K562 (cell line): ENCODE measurements at regions of chr3 and their contacts with region 1.

Region 1: GRCh38 chr3:84209474-84209873 is 749.3 kb upstream of the CADM2 start:
- DNase-seq: no peak
- ATAC-seq: no peak
- H3K4me3 ChIP-seq: no peak overlapping the region
- H3K27ac ChIP-seq: no peak overlapping the region
- H3K4me1 ChIP-seq: no peaks in the 10 kb centered on the region
- H3K27me3 ChIP-seq: no peaks in the 10 kb centered on the region
- CTCF ChIP-seq: no peak
- EP300 ChIP-seq: no peak
- POLR2A ChIP-seq: no peak
- RAD21 ChIP-seq: no peak

Region 2: GRCh38 chr3:84275532-84275931 is 66.1 kb after region 1 on chr3:
- CTCF ChIA-PET with region 1: no interaction called
- POLR2A ChIA-PET with region 1: no interaction called
- in situ Hi-C with region 1: no loop called
- intact Hi-C with region 1: no loop called
- DNase-seq: no peak
- ATAC-seq: no peak
- H3K4me3 ChIP-seq: no peak overlapping the region
- H3K27ac ChIP-seq: no peak overlapping the region
- H3K4me1 ChIP-seq: no peaks in the 10 kb centered on the region
- H3K27me3 ChIP-seq: no peaks in the 10 kb centered on the region
- CTCF ChIP-seq: no peak
- EP300 ChIP-seq: no peak
- POLR2A ChIP-seq: no peak
- RAD21 ChIP-seq: no peak

Region 3: GRCh38 chr3:84621823-84622222 is 412.3 kb after region 1 on chr3:
- CTCF ChIA-PET with region 1: no interaction called
- POLR2A ChIA-PET with region 1: no interaction called
- in situ Hi-C with region 1: no loop called
- intact Hi-C with region 1: loop called (anchors 10 kb)
- DNase-seq: no peak
- ATAC-seq: no peak
- H3K4me3 ChIP-seq: no peak overlapping the region
- H3K27ac ChIP-seq: no peak overlapping the region
- H3K4me1 ChIP-seq: no peaks in the 10 kb centered on the region
- H3K27me3 ChIP-seq: no peaks in the 10 kb centered on the region
- CTCF ChIP-seq: no peak
- EP300 ChIP-seq: no peak
- POLR2A ChIP-seq: no peak
- RAD21 ChIP-seq: no peak